OCI-LY7 (cell line): ENCODE measurements at regions of chr11 and their contacts with region 1.

Region 1: GRCh38 chr11:1852877-1853276 is at the start of gene LSP1:
- DNase-seq: peak; percentile 96
- H3K4me3 ChIP-seq: peak within 1 kb of the TSS; percentile 93
- H3K27ac ChIP-seq: peak within 1 kb of the TSS; percentile 96
- H3K4me1 ChIP-seq: peaks cover 53% of the 10 kb centered on the region
- CTCF ChIP-seq: no peak
- total RNA-seq, gene LSP1: 195 and 232 TPM in 2 replicates

Region 2: DNA sequence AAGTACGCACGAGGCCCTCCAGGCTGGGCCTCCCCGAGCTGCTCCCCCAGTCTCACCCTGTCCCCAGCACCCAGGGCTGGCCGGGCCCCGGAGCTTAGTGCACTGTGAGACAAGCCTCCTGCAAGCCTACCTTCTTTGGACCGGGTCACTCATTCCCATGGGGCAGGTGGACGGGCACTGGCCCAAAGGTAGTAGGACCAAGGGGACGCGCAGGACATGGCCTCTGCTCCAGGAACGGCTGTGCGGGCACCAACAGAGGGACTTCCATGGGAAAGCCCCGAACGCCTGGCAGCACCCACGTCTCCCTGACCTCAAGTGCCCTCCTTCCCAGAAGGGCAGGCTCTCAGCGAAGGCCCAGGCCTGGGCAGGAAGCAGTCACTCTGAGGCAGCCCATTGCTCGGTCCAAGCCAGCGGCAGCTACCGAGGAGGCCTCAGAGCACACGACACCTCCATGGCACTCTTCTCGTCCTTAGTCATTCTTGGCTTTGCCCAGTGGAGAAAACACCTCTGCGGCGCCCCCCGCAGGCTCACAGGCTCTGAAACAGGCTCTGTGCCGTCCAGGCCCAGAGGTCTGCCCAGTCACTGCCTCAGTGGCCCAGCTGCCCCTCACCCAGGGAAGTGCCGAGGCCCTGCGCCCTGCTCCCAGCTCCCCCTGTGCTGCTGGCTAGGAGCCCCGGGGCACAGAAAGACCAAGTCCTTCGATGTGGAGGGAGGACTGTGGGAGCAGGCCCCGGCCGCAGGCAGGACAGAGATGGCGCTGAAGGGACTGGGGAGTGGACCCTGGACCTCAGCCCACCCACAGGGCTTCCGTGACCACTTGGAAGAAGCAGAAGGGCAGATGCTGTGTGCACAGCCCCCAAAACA is 370.1 kb before region 1 on chr11:
- CTCF ChIA-PET with region 1: no interaction called
- POLR2A ChIA-PET with region 1: no interaction called
- intact Hi-C with region 1: no loop called
- DNase-seq: no peak
- H3K4me3 ChIP-seq: no peak overlapping the region
- H3K27ac ChIP-seq: no peak overlapping the region
- H3K4me1 ChIP-seq: no peaks in the 10 kb centered on the region
- CTCF ChIP-seq: peak; percentile 41

Region 3: GRCh38 chr11:1521382-1522080 is 331.3 kb before region 1 on chr11:
- CTCF ChIA-PET with region 1: no interaction called
- POLR2A ChIA-PET with region 1: no interaction called
- intact Hi-C with region 1: loop called (anchors 5 kb)
- DNase-seq: peak; percentile 71
- H3K4me3 ChIP-seq: peak overlapping the region; percentile 52
- H3K27ac ChIP-seq: peak overlapping the region; percentile 88
- H3K4me1 ChIP-seq: peaks cover 53% of the 10 kb centered on the region
- CTCF ChIP-seq: 0 out of 2 replicates have a peak, but pooled peaks have one; percentile 9

Region 4: GRCh38 chr11:1882519-1883238 is 29.8 kb after region 1 on chr11:
- CTCF ChIA-PET with region 1: interaction called, 5 read pairs
- POLR2A ChIA-PET with region 1: interaction called, 3 read pairs
- intact Hi-C with region 1: loop called (anchors 2 kb)
- DNase-seq: peak; percentile 80
- H3K4me3 ChIP-seq: no peak overlapping the region
- H3K27ac ChIP-seq: peak overlapping the region; percentile 48
- H3K4me1 ChIP-seq: peaks cover 21% of the 10 kb centered on the region
- CTCF ChIP-seq: peak; percentile 91